T-cell (primary cell): ENCODE measurements at regions of chr7 and their contacts with region 1.

Region 1: GRCh38 chr7:144391823-144392255 is 11.7 kb downstream of the NOBOX start:
- DNase-seq: peak in 15 of 35 experiments; percentile 3 to 73 (median 15)
- ATAC-seq: peak; percentile 63 to 78 (median 71)
- H3K4me3 ChIP-seq: no peak overlapping the region
- H3K4me3 Mint-ChIP-seq: peak overlapping the region; percentile 28 to 50 (median 42)
- H3K27ac ChIP-seq: no peak overlapping the region
- H3K27ac Mint-ChIP-seq: peak overlapping the region in 1 of 2 donors; percentile 29
- H3K4me1 ChIP-seq: peaks cover 3 to 5% of the 10 kb centered on the region in 2 experiments
- H3K4me1 Mint-ChIP-seq: peaks cover 4 to 6% (median 4%) of the 10 kb centered on the region in 3 donors
- H3K27me3 ChIP-seq: no peaks in the 10 kb centered on the region
- H3K27me3 Mint-ChIP-seq: no peaks in the 10 kb centered on the region

Region 2: GRCh38 chr7:142697270-142697669 is 1694.6 kb before region 1 on chr7:
- CTCF ChIA-PET with region 1: interaction called in 1 of 2 experiments, 11 read pairs
- POLR2A ChIA-PET with region 1: no interaction called
- DNase-seq: no peak
- ATAC-seq: no peak
- H3K4me3 ChIP-seq: no peak overlapping the region
- H3K4me3 Mint-ChIP-seq: no peak overlapping the region
- H3K27ac ChIP-seq: no peak overlapping the region
- H3K27ac Mint-ChIP-seq: no peak overlapping the region
- H3K4me1 ChIP-seq: peaks cover 4 to 10% of the 10 kb centered on the region in 2 experiments
- H3K4me1 Mint-ChIP-seq: peaks cover 31 to 47% (median 33%) of the 10 kb centered on the region in 3 donors
- H3K27me3 ChIP-seq: no peaks in the 10 kb centered on the region
- H3K27me3 Mint-ChIP-seq: no peaks in the 10 kb centered on the region